Tibial artery (tissue), 4 donors: ENCODE measurements at regions of chr18 and their contacts with region 1.

Region 1: GRCh38 chr18:77067291-77068061 is 65.1 kb downstream of the MBP start:
- DNase-seq: peak; percentile 81 to 86
- H3K4me3 ChIP-seq: no peak overlapping the region
- H3K27ac ChIP-seq: peak overlapping the region; percentile 68 to 73
- H3K4me1 ChIP-seq: peaks cover 0 to 43% (median 32%) of the 10 kb centered on the region in 4 donors
- H3K27me3 ChIP-seq: no peaks in the 10 kb centered on the region
- CTCF ChIP-seq: peak in 1 of 2 experiments; percentile 9

Region 2: DNA sequence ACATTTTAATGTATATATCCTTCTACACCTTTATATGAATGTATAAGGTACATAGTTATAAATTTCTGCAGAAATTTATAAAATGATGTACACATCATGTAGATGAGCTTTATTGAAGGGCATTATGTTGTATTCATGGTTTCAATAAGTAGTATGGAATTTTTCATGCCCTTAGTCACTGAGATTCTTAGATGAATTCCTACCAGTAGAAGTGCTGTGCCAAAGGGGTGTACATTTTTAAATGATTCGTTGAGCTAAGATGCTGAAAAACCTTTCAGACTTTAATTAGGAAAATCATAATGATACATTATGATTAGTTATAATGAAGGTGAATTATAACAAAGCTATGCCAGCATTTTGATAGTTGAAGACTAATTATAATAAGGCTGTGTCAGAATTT is 129.9 kb before region 1 on chr18:
- intact Hi-C with region 1: no loop called
- DNase-seq: no peak
- H3K4me3 ChIP-seq: no peak overlapping the region
- H3K27ac ChIP-seq: no peak overlapping the region
- H3K4me1 ChIP-seq: no peaks in the 10 kb centered on the region
- H3K27me3 ChIP-seq: no peaks in the 10 kb centered on the region
- CTCF ChIP-seq: no peak

Region 3: DNA sequence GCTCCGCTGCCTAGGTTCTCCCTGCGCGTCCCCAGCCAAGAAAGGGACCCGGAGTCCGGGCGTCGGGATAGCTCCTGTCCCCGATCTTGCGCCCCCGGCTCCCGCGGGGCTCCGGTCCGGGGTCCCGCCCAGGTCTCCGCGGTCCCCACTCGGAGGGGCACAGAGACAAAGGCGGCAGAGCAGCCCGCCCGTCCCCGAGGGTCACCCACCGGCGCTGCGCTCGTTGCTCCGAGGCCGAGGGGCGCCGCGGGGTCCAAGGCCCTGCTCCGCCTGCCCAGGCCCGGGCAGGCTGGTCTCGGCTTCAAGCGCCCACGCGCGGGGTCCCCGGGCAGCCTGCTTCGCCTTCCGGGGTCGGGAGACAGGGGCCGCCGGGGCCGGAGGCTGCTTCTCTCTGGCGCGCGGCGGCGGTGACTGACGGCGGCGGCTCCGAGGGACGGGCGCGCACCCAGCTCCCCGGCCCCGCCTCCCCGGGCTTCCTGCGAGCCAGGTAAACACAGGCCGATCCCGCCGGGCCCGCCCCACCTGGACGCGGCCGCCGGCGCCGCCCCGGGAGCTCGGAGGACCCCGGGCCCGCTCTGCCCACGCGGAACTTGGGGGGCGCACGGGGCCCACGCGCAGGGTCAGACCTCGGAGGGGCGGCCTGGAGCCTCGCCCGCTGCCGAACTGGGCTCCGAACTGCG is 65.0 kb after region 1 on chr18 and contains the start of gene MBP:
- intact Hi-C with region 1: loop called (anchors 5 kb)
- DNase-seq: peak in 1 of 2 donors; percentile 83
- H3K4me3 ChIP-seq: peak within 1 kb of the TSS; percentile 69 to 91
- H3K27ac ChIP-seq: peak within 1 kb of the TSS; percentile 90 to 98
- H3K4me1 ChIP-seq: peaks cover 0 to 48% (median 23%) of the 10 kb centered on the region in 4 donors
- H3K27me3 ChIP-seq: no peaks in the 10 kb centered on the region
- CTCF ChIP-seq: no peak

Region 4: DNA sequence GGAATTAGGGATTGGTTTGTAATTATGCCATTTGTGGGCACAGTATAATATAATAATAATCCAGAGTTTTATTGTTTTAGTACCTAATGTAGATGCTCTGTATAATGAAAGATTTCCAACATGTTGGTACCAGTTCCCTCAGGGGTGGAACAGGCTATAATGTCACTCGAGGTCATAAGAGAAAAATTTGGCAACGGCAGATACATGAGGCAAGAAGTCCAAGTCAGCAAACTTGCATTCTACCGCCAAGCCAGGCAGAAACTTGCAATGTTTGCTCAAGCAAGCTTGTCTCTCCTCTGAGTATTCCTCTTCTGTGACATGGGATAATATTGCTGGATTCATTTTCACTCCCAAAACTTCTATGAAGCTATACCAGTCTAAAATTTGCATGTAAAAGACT is 1392.2 kb after region 1 on chr18:
- intact Hi-C with region 1: no loop called
- DNase-seq: no peak
- H3K4me3 ChIP-seq: no peak overlapping the region
- H3K27ac ChIP-seq: no peak overlapping the region
- H3K4me1 ChIP-seq: no peaks in the 10 kb centered on the region
- H3K27me3 ChIP-seq: no peaks in the 10 kb centered on the region
- CTCF ChIP-seq: no peak